ENCODE measurements at regions of chr14 and their contacts with region 1.

Region 1: GRCh38 chr14:21723431-21724045 is 49.9 kb upstream of the OR4E1 start:
- DNase-seq: peak in 8 of 10 donors; percentile 11 to 70 (median 40)
- ATAC-seq: peak; percentile 76 to 81
- H3K4me3 Mint-ChIP-seq: peak overlapping the region; percentile 39 to 95 (median 80)
- H3K27ac Mint-ChIP-seq: peak overlapping the region; percentile 2 to 89 (median 76)
- H3K4me1 Mint-ChIP-seq: peaks cover 0 to 5% (median 1%) of the 10 kb centered on the region in 4 donors
- H3K27me3 Mint-ChIP-seq: peaks cover 12 to 56% (median 28%) of the 10 kb centered on the region in 5 donors

Region 2: DNA sequence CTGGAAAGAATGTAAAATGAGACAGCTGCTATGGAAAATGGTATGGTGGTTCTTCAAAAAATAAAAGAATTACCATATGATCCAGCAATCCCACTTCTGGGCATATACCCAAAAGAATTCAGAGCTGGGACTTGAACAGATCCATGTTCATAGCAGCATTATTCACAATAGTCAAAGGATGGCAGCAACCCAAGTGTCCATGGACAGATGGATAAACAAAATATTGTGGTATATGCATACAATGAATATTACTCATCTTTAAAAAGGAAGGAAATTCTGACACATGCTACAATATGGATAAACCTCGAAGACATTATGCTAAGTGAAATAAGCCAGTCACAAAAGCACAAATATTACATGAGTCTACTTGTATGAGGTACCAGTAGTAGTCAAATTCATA is 255.9 kb before region 1 on chr14:
- POLR2A ChIA-PET with region 1: no interaction called
- DNase-seq: no peak
- ATAC-seq: no peak
- H3K4me3 Mint-ChIP-seq: no peak overlapping the region
- H3K27ac Mint-ChIP-seq: no peak overlapping the region
- H3K4me1 Mint-ChIP-seq: peaks cover 2 to 7% (median 3%) of the 10 kb centered on the region in 4 donors
- H3K27me3 Mint-ChIP-seq: no peaks in the 10 kb centered on the region

Region 3: GRCh38 chr14:21668377-21668776 is 55.2 kb before region 1 on chr14:
- POLR2A ChIA-PET with region 1: no interaction called
- DNase-seq: no peak
- ATAC-seq: no peak
- H3K4me3 Mint-ChIP-seq: no peak overlapping the region
- H3K27ac Mint-ChIP-seq: no peak overlapping the region
- H3K4me1 Mint-ChIP-seq: no peaks in the 10 kb centered on the region
- H3K27me3 Mint-ChIP-seq: peaks cover 18 to 45% (median 27%) of the 10 kb centered on the region in 5 donors

Region 4: GRCh38 chr14:21711360-21711961 is 12.1 kb before region 1 on chr14:
- POLR2A ChIA-PET with region 1: interaction called, 12 read pairs
- DNase-seq: peak in 6 of 10 donors; percentile 9 to 56 (median 36)
- ATAC-seq: peak; percentile 55 to 66
- H3K4me3 Mint-ChIP-seq: peak overlapping the region in 8 of 10 donors; percentile 41 to 84 (median 66)
- H3K27ac Mint-ChIP-seq: peak overlapping the region in 9 of 10 donors; percentile 19 to 89 (median 68)
- H3K4me1 Mint-ChIP-seq: peaks cover 0 to 8% (median under 1%) of the 10 kb centered on the region in 4 donors
- H3K27me3 Mint-ChIP-seq: peaks cover 2 to 35% (median 22%) of the 10 kb centered on the region in 5 donors

Region 5: DNA sequence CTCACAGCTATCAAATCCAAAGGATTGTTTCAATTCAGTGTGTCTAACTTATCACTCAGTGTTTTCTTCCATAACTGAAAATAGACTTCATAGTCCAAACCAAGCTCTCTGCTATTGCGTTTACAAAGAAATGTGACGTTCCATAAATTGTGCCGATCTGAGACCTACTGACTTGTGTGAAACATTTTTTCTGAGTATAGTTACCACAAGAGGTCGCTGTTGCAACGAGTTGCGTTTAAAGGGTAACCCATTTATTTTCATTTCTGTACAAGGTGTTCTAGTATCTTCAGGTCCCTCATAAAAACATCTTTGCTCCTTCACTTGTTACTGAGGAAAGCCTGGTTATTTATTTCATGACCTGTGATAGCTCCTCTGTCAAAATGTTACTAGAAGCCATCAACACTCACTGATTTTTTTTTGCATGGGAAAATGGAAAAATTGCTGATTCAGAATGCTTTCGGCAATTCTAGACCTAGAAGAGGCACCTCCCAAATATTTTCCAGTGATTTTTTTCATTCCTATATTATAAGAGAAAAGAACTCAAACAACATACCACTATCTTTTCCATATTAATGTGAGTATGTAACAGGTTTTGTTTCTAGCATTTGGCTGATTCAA is 11.0 kb after region 1 on chr14:
- POLR2A ChIA-PET with region 1: interaction called, 11 read pairs
- DNase-seq: peak in 8 of 10 donors; percentile 21 to 73 (median 58)
- ATAC-seq: peak; percentile 50 to 54
- H3K4me3 Mint-ChIP-seq: peak overlapping the region in 9 of 10 donors; percentile 37 to 92 (median 71)
- H3K27ac Mint-ChIP-seq: peak overlapping the region in 9 of 10 donors; percentile 9 to 91 (median 43)
- H3K4me1 Mint-ChIP-seq: peaks cover 12 to 18% (median 14%) of the 10 kb centered on the region in 4 donors
- H3K27me3 Mint-ChIP-seq: peaks cover 15 to 52% (median 33%) of the 10 kb centered on the region in 5 donors

Measured in naive thymus-derived CD8-positive, alpha-beta T cell (primary cell).